CD4-positive, alpha-beta memory T cell (primary cell): ENCODE measurements at regions of chr4 and their contacts with region 1.

Region 1: DNA sequence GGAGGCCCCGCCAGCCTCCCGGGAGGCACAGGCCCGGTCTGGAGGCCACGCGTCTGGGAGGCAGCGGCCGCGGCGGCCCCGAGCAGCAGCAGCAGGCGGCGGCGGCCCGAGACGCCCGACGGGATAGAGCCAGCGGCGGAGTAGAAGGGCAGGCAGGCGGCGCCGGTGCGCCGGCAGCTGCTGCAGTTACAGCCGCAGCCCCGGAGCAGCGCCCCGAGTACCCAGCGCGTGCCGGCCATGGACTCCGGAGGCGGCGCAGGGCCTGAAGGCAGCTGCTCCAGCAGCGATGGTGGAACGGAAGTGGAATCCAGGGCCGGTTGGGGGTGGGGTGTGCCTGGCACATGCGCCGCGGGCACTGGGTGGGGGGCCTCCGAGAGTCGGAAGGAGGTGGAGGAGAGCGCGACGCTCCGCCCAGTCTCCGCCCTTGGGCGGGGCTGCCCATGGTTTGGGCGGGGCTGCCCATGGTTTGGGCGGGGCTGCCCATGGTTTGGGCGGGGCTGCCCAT is at the start of gene GRSF1:
- DNase-seq: peak; percentile 95 to 96 (median 95)
- H3K4me3 ChIP-seq: peak within 1 kb of the TSS; percentile 58 to 69
- H3K4me3 Mint-ChIP-seq: peak within 1 kb of the TSS; percentile 95 to 99 (median 98)
- H3K27ac ChIP-seq: peak within 1 kb of the TSS; percentile 77
- H3K27ac Mint-ChIP-seq: peak within 1 kb of the TSS; percentile 94 to 99 (median 97)
- H3K4me1 ChIP-seq: peaks cover 32% of the 10 kb centered on the region
- H3K4me1 Mint-ChIP-seq: peaks cover 16 to 39% (median 27%) of the 10 kb centered on the region in 4 donors
- H3K27me3 ChIP-seq: no peaks in the 10 kb centered on the region
- H3K27me3 Mint-ChIP-seq: no peaks in the 10 kb centered on the region
- total RNA-seq, gene GRSF1: 47.0 to 54.3 TPM

Region 2: DNA sequence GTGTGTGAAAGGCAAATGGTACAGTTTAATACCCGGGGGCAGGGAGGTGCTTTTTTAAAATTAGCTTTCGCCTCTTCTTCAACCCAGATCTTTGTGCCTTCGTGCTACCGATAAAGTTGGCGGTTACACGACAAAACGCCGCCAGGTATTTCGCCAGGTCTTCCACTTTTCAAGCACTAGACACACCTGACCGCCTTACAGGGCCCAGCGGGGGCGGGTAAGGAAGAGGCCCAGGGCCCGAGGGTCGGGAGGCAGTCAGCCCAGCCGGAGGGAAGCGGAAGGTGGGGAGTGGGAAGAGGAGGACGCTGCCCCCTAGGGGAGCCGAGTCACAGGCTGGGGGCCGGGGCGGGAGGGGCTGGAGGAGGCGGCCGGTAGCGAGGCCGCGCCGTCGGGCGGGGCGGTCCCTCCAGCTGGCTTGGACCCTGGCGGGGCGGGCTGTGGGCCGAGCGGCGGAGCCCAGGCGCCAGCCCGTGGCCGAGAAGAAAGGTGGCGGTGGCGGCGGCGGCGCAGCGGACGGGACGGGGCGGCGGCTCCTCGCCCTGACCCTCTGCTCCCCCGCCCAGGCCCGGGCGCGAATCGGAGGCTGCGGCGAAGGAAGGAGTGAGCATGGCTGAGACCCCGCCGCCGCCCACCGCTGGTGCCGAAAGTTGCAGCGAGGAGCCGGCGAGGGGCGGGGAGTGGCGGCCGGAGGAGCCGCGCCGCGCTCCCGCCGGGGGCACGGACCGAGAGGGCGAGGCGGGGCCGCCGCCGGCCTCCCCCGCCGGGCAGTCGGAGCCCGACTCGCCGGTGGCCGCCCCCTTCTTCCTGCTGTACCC is 135.1 kb before region 1 on chr4:
- CTCF ChIA-PET with region 1: interaction called, 5 read pairs
- POLR2A ChIA-PET with region 1: interaction called, 47 read pairs
- intact Hi-C with region 1: loop called (anchors 1 kb)
- DNase-seq: peak; percentile 43 to 73 (median 49)
- H3K4me3 ChIP-seq: peak overlapping the region; percentile 32 to 71
- H3K4me3 Mint-ChIP-seq: peak overlapping the region; percentile 87 to 96 (median 91)
- H3K27ac ChIP-seq: peak overlapping the region; percentile 79
- H3K27ac Mint-ChIP-seq: peak overlapping the region; percentile 89 to 97 (median 95)
- H3K4me1 ChIP-seq: peaks cover 28% of the 10 kb centered on the region
- H3K4me1 Mint-ChIP-seq: peaks cover 17 to 29% (median 21%) of the 10 kb centered on the region in 4 donors
- H3K27me3 ChIP-seq: no peaks in the 10 kb centered on the region
- H3K27me3 Mint-ChIP-seq: no peaks in the 10 kb centered on the region

Region 3: DNA sequence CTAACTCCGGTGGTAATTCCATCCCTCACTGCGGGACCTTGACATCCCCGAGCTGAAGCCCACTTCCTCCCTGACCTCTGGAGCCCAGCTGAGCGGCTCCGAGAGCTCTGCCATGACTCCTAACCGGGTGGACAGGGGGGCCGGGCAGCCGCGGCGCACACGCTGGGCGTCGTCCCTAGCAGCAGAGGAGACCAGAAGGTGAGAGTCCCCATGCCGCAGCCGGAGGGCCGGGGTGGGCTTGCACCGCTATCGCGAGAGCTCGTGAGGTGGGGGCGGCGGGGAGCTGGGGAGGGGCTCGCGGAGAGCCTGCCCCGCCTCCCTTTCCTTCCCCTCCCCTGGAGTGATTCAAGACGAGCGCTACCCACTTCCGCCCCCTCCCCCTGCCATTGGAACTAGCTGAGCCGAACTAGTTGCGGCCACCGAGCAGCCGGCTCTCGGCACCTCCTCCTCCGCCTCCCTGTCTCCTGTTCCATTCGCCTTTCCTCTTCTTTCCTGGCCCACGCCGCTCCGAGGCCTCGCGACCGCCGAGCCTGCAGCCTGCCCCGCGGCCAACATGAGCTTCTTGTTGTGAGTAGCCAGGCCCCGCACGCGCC is 62.4 kb after region 1 on chr4 and contains the start of gene MOB1B:
- CTCF ChIA-PET with region 1: interaction called, 12 read pairs
- POLR2A ChIA-PET with region 1: interaction called, 30 read pairs
- intact Hi-C with region 1: loop called (anchors 1 kb)
- DNase-seq: peak; percentile 81 to 88 (median 82)
- H3K4me3 ChIP-seq: peak within 1 kb of the TSS; percentile 79 to 95
- H3K4me3 Mint-ChIP-seq: peak within 1 kb of the TSS; percentile 97 to 99 (median 98)
- H3K27ac ChIP-seq: peak within 1 kb of the TSS; percentile 71
- H3K27ac Mint-ChIP-seq: peak within 1 kb of the TSS; percentile 49 to 94 (median 92)
- H3K4me1 ChIP-seq: peaks cover 17% of the 10 kb centered on the region
- H3K4me1 Mint-ChIP-seq: peaks cover 17 to 41% (median 26%) of the 10 kb centered on the region in 4 donors
- H3K27me3 ChIP-seq: no peaks in the 10 kb centered on the region
- H3K27me3 Mint-ChIP-seq: peaks cover 0 to 1% of the 10 kb centered on the region in 2 donors
- total RNA-seq, gene MOB1B: 10.2 to 10.8 TPM